Activated B cell treated with CpG ODN at 0.5 μM for 24 hours (primary cell): ENCODE measurements at regions of chr6 and their contacts with region 1.

Region 1: GRCh38 chr6:149513915-149514314 is 29.1 kb upstream of the ZC3H12D start:
- DNase-seq: no peak
- ATAC-seq: no peak
- H3K4me3 Mint-ChIP-seq: no peak overlapping the region
- H3K27ac Mint-ChIP-seq: peak overlapping the region; percentile 50
- H3K4me1 Mint-ChIP-seq: peaks cover 23% of the 10 kb centered on the region
- H3K27me3 Mint-ChIP-seq: no peaks in the 10 kb centered on the region
- CTCF ChIP-seq: no peak

Region 2: GRCh38 chr6:149082286-149082707 is 431.6 kb before region 1 on chr6:
- CTCF ChIA-PET with region 1: interaction called, 18 read pairs
- POLR2A ChIA-PET with region 1: no interaction called
- intact Hi-C with region 1: loop called (anchors 1 kb)
- DNase-seq: peak; percentile 43
- ATAC-seq: peak; percentile 75
- H3K4me3 Mint-ChIP-seq: no peak overlapping the region
- H3K27ac Mint-ChIP-seq: no peak overlapping the region
- H3K4me1 Mint-ChIP-seq: peaks cover 13% of the 10 kb centered on the region
- H3K27me3 Mint-ChIP-seq: no peaks in the 10 kb centered on the region
- CTCF ChIP-seq: peak; percentile 26

Region 3: GRCh38 chr6:149454386-149454848 is 59.5 kb before region 1 on chr6:
- CTCF ChIA-PET with region 1: interaction called, 3 read pairs
- POLR2A ChIA-PET with region 1: interaction called, 3 read pairs
- intact Hi-C with region 1: loop called (anchors 2 kb)
- DNase-seq: no peak
- ATAC-seq: no peak
- H3K4me3 Mint-ChIP-seq: no peak overlapping the region
- H3K27ac Mint-ChIP-seq: no peak overlapping the region
- H3K4me1 Mint-ChIP-seq: peaks cover 19% of the 10 kb centered on the region
- H3K27me3 Mint-ChIP-seq: no peaks in the 10 kb centered on the region
- CTCF ChIP-seq: no peak

Region 4: GRCh38 chr6:149473080-149474052 is 40.5 kb before region 1 on chr6:
- CTCF ChIA-PET with region 1: interaction called, 31 read pairs
- POLR2A ChIA-PET with region 1: interaction called, 9 read pairs
- intact Hi-C with region 1: loop called (anchors 1 kb)
- DNase-seq: peak; percentile 44
- ATAC-seq: peak; percentile 31
- H3K4me3 Mint-ChIP-seq: peak overlapping the region; percentile 81
- H3K27ac Mint-ChIP-seq: peak overlapping the region; percentile 91
- H3K4me1 Mint-ChIP-seq: peaks cover 93% of the 10 kb centered on the region
- H3K27me3 Mint-ChIP-seq: no peaks in the 10 kb centered on the region
- CTCF ChIP-seq: no peak

Region 5: GRCh38 chr6:149499066-149499465 is 14.8 kb before region 1 on chr6:
- CTCF ChIA-PET with region 1: interaction called, 13 read pairs
- POLR2A ChIA-PET with region 1: interaction called, 7 read pairs
- intact Hi-C with region 1: loop called (anchors 1 kb)
- DNase-seq: no peak
- ATAC-seq: no peak
- H3K4me3 Mint-ChIP-seq: no peak overlapping the region
- H3K27ac Mint-ChIP-seq: peak overlapping the region; percentile 87
- H3K4me1 Mint-ChIP-seq: peaks cover 61% of the 10 kb centered on the region
- H3K27me3 Mint-ChIP-seq: no peaks in the 10 kb centered on the region
- CTCF ChIP-seq: no peak

Region 6: DNA sequence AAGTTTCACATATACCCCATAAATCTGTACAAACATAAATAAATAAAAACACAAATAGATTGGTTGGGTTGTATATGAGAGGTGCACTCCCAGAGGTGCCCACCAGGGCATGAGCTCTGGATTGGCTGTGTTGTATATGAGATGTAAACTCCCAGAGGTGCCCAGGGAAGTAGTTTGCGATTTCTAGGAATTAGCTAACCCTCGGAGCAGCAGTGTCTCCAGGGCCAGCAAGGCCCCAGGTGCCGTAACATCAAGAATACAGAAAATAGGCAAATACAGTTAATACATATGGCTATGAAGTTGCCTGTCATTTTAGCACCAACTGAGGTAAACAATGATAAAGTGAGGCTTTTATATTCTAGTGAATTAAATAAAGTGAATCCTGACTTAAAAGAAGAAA is 46.8 kb after region 1 on chr6:
- CTCF ChIA-PET with region 1: no interaction called
- POLR2A ChIA-PET with region 1: no interaction called
- intact Hi-C with region 1: no loop called
- DNase-seq: no peak
- ATAC-seq: no peak
- H3K4me3 Mint-ChIP-seq: no peak overlapping the region
- H3K27ac Mint-ChIP-seq: no peak overlapping the region
- H3K4me1 Mint-ChIP-seq: peaks cover 6% of the 10 kb centered on the region
- H3K27me3 Mint-ChIP-seq: peaks cover 8% of the 10 kb centered on the region
- CTCF ChIP-seq: no peak